ENCODE measurements at regions of chr16 and their contacts with region 1.

Region 1: DNA sequence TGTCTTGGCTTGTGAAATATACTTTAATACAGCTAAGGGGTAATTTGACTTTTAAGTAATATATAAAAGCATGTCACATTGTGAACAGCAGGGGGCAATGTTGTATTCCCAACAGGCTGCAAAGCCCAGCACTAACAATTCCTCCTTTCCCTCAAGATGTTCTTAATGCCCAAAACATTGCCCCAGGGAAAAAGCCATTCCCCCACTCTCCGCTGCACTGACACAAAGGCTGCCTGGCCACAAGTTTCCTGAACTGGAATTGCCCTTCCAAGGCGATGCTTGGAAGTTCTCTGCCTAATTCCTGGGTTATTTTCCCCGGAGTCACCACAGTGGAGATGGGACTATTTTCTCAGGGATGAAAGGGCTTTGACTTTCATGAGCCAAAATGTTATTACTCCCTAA is 27.2 kb downstream of the CLEC16A start:
- DNase-seq: peak; percentile 36
- H3K4me3 Mint-ChIP-seq: no peak overlapping the region
- H3K27ac Mint-ChIP-seq: no peak overlapping the region
- H3K4me1 Mint-ChIP-seq: peaks cover 49% of the 10 kb centered on the region
- H3K27me3 Mint-ChIP-seq: no peaks in the 10 kb centered on the region

Region 2: GRCh38 chr16:10737068-10737625 is 234.4 kb before region 1 on chr16:
- CTCF ChIA-PET with region 1: no interaction called
- POLR2A ChIA-PET with region 1: no interaction called
- intact Hi-C with region 1: no loop called
- DNase-seq: peak; percentile 78
- H3K4me3 Mint-ChIP-seq: peak overlapping the region; percentile 46
- H3K27ac Mint-ChIP-seq: peak overlapping the region; percentile 38
- H3K4me1 Mint-ChIP-seq: peaks cover 26% of the 10 kb centered on the region
- H3K27me3 Mint-ChIP-seq: no peaks in the 10 kb centered on the region

Region 3: DNA sequence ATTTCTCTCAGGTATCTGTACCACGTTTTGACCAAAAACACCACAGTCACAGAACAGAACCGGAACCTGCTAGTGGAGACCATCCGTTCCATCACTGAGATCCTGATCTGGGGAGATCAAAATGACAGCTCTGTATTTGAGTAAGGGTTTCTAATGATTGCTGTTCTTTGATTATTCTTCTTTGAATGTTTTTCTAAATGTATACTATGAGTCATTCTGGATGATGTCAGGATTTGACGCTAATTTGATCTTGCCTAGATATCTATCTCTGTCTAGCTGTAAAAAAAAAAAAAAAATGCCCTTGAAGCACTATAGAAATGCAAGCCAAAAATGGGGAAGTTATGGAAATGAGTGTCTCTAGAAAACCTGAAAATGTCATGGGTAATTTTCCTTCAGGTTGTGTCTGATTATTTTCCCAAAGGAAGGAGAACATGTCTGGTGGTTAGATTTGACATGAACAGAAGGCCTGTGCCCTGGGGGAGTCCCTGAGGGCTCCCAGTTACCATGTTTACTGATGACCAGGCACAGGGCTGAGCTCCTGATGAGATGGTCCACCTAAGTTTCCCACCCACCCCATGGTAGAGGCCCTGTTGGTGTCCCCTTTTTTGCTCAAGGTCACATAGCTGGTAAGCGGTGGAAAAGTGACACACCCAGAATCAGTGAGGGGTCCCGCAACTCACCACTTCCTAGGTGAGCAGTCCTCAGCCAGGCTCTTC is 13.6 kb before region 1 on chr16:
- CTCF ChIA-PET with region 1: interaction called, 18 read pairs
- POLR2A ChIA-PET with region 1: interaction called, 3 read pairs
- intact Hi-C with region 1: no loop called
- DNase-seq: peak; percentile 65
- H3K4me3 Mint-ChIP-seq: peak overlapping the region; percentile 7
- H3K27ac Mint-ChIP-seq: peak overlapping the region; percentile 87
- H3K4me1 Mint-ChIP-seq: peaks cover 73% of the 10 kb centered on the region
- H3K27me3 Mint-ChIP-seq: no peaks in the 10 kb centered on the region

Region 4: DNA sequence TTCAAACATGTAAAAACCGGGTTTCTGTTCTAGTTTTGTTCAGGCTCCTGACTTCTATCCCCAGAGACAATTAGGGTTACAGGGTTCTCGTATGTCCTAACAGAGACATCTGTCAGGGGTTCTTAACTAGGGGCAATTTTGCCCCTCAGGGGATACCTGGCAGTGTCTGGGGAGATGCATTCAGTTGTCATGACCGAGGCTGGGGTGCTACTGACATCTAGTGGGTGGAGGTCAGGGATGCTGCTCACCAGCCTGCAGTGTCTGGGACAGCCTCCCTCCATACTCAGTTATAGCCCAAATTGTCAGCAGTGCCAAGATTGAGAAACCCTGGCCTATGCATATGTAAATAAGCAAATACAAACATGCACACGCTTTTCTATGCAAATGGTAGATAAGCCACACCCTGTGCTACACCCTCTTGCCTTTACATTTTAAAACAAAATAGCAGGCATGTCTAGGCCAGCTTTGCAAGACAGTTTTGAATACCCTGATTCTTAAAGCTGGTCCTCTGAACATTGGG is 10.2 kb after region 1 on chr16:
- CTCF ChIA-PET with region 1: interaction called, 45 read pairs
- POLR2A ChIA-PET with region 1: interaction called, 31 read pairs
- intact Hi-C with region 1: no loop called
- DNase-seq: peak; percentile 79
- H3K4me3 Mint-ChIP-seq: peak overlapping the region; percentile 71
- H3K27ac Mint-ChIP-seq: peak overlapping the region; percentile 87
- H3K4me1 Mint-ChIP-seq: peaks cover 48% of the 10 kb centered on the region
- H3K27me3 Mint-ChIP-seq: no peaks in the 10 kb centered on the region

Region 5: DNA sequence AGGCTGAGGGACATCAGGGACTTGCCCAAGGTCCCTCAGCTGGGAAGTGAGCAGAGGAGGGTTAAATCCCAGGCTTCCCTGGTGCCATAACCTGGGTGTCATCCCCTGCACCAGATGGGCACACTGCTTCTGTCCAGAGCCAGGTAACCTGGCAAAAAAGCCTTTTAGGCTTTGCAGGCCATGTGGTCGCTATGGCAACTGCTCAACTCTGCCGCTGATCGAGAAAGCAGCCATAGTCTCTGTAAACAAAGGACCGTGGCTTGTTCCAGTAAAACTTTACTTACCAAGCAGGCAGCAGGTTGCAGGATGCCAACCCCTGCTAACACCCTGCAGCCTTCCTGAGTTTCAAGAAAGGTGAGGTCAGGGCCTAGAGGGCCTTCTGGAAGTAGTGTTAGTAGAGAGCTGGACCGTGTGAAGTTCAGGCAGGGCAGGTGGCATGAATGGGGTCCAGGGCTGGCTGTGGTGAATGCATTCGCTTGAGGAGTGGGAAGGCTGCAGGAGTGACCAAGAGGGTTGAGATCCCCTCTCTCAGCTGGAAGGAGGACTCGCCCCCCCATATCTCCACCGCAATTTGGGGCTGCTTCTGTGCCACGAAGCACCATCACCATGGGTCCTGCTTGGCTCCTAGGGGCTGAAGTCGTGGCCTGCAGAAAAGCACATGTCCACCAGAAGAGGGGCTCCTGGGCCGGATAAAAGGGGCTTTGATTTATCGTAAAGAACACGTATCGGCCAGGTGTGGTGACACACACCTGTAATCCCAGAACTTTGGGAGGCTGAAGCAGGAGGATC is 193.1 kb after region 1 on chr16:
- CTCF ChIA-PET with region 1: interaction called, 5 read pairs
- POLR2A ChIA-PET with region 1: no interaction called
- intact Hi-C with region 1: loop called (anchors 5 kb)
- DNase-seq: no peak
- H3K4me3 Mint-ChIP-seq: no peak overlapping the region
- H3K27ac Mint-ChIP-seq: peak overlapping the region; percentile 24
- H3K4me1 Mint-ChIP-seq: peaks cover 26% of the 10 kb centered on the region
- H3K27me3 Mint-ChIP-seq: no peaks in the 10 kb centered on the region

Region 6: DNA sequence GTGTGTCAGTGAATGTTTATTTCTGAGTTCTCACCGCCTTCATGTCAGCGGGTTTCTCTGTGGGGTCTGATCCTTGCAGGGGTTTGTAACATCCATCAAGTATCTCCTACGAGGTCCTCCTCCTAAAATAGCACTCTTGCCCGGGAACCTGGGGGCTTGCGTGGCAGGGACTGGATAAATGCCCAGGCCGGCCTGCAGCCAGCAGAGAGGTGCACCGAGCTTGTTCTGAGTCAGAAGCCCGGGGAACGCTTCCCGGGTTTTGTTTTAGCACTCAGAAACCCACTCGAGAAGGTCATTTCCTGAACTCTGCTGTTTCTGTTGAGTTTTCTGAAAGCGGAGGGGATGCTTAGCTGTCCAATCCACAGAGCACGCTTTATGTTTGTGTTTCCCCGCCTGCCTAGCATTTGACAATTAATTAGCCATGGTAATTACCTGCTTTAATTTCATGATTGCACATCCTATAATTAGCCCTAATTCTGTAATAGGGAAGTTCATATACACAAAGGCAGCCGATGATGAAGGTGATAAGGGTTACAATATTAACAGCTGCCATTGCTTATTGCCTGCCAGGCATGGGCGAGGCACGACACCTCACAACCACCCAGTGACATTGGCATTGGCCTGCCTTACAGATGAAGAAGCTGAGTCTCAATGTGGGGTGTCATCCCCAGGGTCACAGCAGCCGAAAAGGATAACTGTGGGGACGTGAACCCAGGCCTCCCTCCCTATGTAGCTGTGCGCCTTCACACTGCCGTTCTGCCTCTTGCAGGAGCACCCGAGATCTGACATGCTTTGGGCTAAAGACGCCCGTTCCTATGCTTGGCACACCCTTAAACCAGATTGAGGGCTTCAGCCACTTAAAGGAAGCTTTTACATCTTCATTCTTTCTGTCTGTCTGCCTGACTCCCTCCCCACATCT is 1499.0 kb after region 1 on chr16:
- CTCF ChIA-PET with region 1: no interaction called
- POLR2A ChIA-PET with region 1: no interaction called
- intact Hi-C with region 1: no loop called
- DNase-seq: no peak
- H3K4me3 Mint-ChIP-seq: no peak overlapping the region
- H3K27ac Mint-ChIP-seq: no peak overlapping the region
- H3K4me1 Mint-ChIP-seq: no peaks in the 10 kb centered on the region
- H3K27me3 Mint-ChIP-seq: no peaks in the 10 kb centered on the region

Measured in activated CD4-positive, alpha-beta memory T cell treated with anti-CD3 and anti-CD28 coated beads for 36 hours (primary cell).